B cell (primary cell): ENCODE measurements at regions of chr6 and their contacts with region 1.

Region 1: GRCh38 chr6:41463062-41463930 is 82.9 kb upstream of the FOXP4 start:
- DNase-seq: peak; percentile 65
- ATAC-seq: peak; percentile 68
- H3K4me3 ChIP-seq: no peak overlapping the region
- H3K4me3 Mint-ChIP-seq: no peak overlapping the region
- H3K27ac ChIP-seq: no peak overlapping the region
- H3K27ac Mint-ChIP-seq: no peak overlapping the region
- H3K4me1 ChIP-seq: peaks cover 8 to 10% of the 10 kb centered on the region in 2 donors
- H3K4me1 Mint-ChIP-seq: peaks cover 11% of the 10 kb centered on the region
- H3K27me3 ChIP-seq: peaks cover 0 to 21% (median 1%) of the 10 kb centered on the region in 4 experiments
- H3K27me3 Mint-ChIP-seq: peaks cover 38% of the 10 kb centered on the region
- CTCF ChIP-seq: peak; percentile 72

Region 2: DNA sequence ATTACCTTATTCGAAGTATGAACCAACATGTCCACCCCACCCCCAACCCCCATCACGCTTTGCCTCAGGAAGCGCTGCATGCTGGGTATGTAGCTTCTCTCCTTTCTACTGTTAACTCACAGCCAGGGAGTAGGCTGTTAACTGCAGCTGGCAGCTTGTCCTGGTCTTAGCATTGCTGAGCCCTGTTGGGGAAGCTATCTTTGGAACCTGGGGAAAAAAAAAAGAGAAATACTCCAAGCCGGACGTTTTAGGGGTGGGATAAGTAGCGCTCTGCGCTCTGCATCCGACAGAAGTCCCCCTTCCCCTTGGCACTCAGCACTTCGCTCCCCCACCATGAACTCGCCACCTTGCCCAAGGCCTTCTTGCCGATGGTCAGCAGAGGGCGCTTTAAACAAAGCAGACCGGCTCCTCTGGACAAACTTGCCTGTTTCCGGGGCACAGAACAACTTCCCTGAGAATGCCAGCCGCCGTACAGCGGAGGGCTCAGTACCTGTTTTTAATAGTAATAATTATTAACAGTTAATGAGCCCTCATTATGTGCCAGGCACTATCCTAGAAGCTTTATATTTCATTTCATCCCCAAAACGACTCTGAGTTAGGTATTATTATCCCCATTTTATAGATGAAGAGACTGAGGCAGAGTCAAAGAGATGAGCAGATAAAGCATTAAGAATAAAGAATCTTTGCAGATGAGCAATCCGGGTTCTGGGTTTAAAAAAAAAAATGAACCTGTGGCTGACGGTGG is 139.7 kb after region 1 on chr6:
- CTCF ChIA-PET with region 1: interaction called, 181 read pairs
- POLR2A ChIA-PET with region 1: no interaction called
- intact Hi-C with region 1: no loop called
- DNase-seq: peak; percentile 85
- ATAC-seq: peak; percentile 90
- H3K4me3 ChIP-seq: peak overlapping the region in 1 of 5 experiments; percentile 11
- H3K4me3 Mint-ChIP-seq: peak overlapping the region; percentile 41
- H3K27ac ChIP-seq: no peak overlapping the region
- H3K27ac Mint-ChIP-seq: no peak overlapping the region
- H3K4me1 ChIP-seq: peaks cover 4 to 13% of the 10 kb centered on the region in 2 donors
- H3K4me1 Mint-ChIP-seq: peaks cover 10% of the 10 kb centered on the region
- H3K27me3 ChIP-seq: peaks cover 0 to 3% (median 0%) of the 10 kb centered on the region in 4 experiments
- H3K27me3 Mint-ChIP-seq: peaks cover 11% of the 10 kb centered on the region
- CTCF ChIP-seq: peak; percentile 82